ENCODE measurements at regions of chr1 and their contacts with region 1.

Region 1: DNA sequence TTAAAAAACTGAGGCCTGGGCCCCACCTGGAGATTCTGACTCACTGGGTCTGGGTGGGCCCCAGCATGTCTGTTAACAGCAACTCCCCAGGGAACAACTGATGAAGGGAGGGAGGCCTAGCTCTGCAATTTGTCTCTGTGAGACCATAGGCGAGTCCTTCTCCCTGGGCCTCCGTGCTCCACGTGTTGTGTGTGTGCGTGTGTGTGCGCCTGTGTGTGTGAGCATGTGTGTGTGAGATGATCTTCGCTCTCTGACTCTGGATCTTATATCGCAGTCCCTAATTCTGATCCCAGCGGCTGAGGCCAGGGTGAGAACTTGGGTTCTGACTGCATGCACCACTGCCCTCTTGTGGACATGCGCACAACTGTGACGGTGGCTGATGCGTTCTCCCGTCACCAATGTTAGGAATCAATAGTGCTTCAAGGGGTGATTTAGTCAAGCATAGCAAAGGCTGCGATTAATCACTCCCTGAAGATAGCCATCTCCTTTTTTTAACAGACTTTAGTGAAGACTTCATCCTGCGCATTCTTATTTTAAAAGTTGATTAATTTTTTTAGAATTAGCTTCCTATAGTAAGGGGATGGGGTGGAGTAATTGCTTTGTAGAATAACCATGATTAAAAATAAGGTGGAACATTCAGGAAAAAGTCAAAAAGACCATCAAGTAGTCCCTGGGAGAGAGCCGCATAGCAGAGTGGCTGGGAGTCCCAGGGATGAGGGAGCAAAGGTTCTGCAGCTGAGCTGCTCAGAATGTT is 62.4 kb upstream of the USP24 start:
- DNase-seq: no peak
- H3K4me3 ChIP-seq: no peak overlapping the region
- H3K27me3 ChIP-seq: no peaks in the 10 kb centered on the region
- CTCF ChIP-seq: peak; percentile 87

Region 2: GRCh38 chr1:55129194-55129728 is 148.3 kb before region 1 on chr1:
- CTCF ChIA-PET with region 1: interaction called, 131 read pairs
- POLR2A ChIA-PET with region 1: no interaction called
- DNase-seq: no peak
- H3K4me3 ChIP-seq: no peak overlapping the region
- H3K27me3 ChIP-seq: no peaks in the 10 kb centered on the region
- CTCF ChIP-seq: no peak

Region 3: DNA sequence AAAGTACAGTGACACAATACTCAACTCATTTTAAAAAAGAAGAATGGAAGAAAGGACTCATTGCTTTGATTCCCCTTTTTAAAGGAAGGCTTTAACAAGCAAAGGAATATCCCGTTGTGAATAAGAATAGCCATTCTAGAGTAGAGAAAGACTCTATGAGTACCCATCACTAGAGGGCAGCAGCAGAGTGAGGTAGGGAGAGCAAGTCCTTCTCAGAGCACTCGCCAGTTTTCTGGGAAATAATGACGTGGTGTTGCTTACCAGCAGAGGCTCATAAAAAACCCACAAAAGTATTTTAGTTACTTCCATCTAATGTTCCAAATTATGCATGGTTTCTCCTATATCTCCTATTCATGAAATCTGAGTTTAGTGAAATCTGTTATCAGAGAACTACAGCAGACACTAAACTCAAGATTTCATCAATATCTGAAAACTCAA is 137.0 kb before region 1 on chr1:
- CTCF ChIA-PET with region 1: interaction called, 131 read pairs
- POLR2A ChIA-PET with region 1: no interaction called
- DNase-seq: peak; percentile 80
- H3K4me3 ChIP-seq: no peak overlapping the region
- H3K27me3 ChIP-seq: no peaks in the 10 kb centered on the region
- CTCF ChIP-seq: peak; percentile 81

Region 4: DNA sequence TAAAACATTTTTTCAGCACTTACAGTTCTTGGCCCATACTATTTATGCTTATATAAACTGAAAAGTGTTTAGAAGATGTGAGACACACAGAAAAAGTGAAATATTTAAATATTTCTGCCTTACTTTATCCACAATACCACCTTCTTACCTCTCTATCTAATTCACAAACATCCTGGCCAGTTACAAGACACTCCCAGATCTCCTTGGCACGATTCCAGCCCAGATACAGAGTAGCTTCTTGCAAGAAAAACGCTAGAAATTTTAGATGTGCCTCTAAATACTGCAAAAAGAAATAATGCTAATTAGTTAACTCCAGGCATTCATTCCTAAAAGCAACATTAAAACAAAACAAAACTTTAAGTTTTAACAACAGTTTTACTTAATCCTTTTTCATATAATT is 130.8 kb before region 1 on chr1:
- CTCF ChIA-PET with region 1: interaction called, 131 read pairs
- POLR2A ChIA-PET with region 1: no interaction called
- DNase-seq: no peak
- H3K4me3 ChIP-seq: no peak overlapping the region
- H3K27me3 ChIP-seq: no peaks in the 10 kb centered on the region
- CTCF ChIP-seq: no peak